ENCODE measurements at regions of chr1 and their contacts with region 1.

Region 1: GRCh38 chr1:157580179-157580827 is 17.6 kb downstream of the FCRL4 start:
- DNase-seq: no peak
- H3K4me3 Mint-ChIP-seq: no peak overlapping the region
- H3K27ac Mint-ChIP-seq: no peak overlapping the region
- H3K4me1 Mint-ChIP-seq: no peaks in the 10 kb centered on the region
- H3K27me3 Mint-ChIP-seq: peaks cover 3% of the 10 kb centered on the region

Region 2: GRCh38 chr1:157181258-157181657 is 399.0 kb before region 1 on chr1:
- intact Hi-C with region 1: no loop called
- DNase-seq: no peak
- H3K4me3 Mint-ChIP-seq: no peak overlapping the region
- H3K27ac Mint-ChIP-seq: no peak overlapping the region
- H3K4me1 Mint-ChIP-seq: no peaks in the 10 kb centered on the region
- H3K27me3 Mint-ChIP-seq: peaks cover 29% of the 10 kb centered on the region

Region 3: DNA sequence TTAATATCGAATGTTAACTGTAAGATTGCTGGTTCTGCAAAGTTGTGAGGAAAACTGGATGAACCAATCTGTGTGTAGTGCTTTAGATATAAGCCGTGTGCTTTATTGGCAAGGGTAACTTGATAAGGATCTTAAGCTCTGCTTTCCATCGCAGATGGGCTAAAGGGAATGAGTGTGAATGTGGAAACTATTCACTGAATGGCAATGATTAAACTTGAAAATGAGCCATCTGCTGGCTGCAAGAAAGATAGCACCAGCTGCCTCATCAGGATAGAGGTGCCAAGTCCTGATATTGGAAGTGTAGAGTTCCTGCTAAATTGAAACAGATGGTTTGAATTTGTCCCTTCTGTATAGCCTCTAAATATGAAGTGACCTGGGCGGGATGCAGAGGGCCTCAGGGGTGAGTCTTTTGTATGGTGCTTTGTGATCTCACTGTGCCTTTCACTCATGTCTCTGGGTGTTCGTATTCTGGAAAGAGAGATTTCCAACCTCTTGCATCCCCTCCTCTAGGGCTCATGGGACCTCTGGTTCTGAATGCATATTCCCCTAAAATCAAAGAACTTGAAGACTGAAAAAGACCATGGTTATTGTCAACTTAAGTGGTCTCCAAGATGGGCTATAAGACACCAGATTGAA is 111.1 kb after region 1 on chr1:
- intact Hi-C with region 1: loop called (anchors 5 kb)
- DNase-seq: no peak
- H3K4me3 Mint-ChIP-seq: no peak overlapping the region
- H3K27ac Mint-ChIP-seq: no peak overlapping the region
- H3K4me1 Mint-ChIP-seq: no peaks in the 10 kb centered on the region
- H3K27me3 Mint-ChIP-seq: no peaks in the 10 kb centered on the region

Region 4: GRCh38 chr1:157704878-157705277 is 124.6 kb after region 1 on chr1:
- intact Hi-C with region 1: no loop called
- DNase-seq: no peak
- H3K4me3 Mint-ChIP-seq: no peak overlapping the region
- H3K27ac Mint-ChIP-seq: no peak overlapping the region
- H3K4me1 Mint-ChIP-seq: no peaks in the 10 kb centered on the region
- H3K27me3 Mint-ChIP-seq: no peaks in the 10 kb centered on the region